Activated naive CD8-positive, alpha-beta T cell treated with anti-CD3 and anti-CD28 coated beads, Interleukin-2, amount 10 ng/mL, durations not matched to agents 7 days and 5 days (primary cell): ENCODE measurements at regions of chr2 and their contacts with region 1.

Region 1: GRCh38 chr2:28392297-28393113 is at the start of gene FOSL2:
- DNase-seq: peak; percentile 91
- ATAC-seq: peak; percentile 79
- H3K4me3 Mint-ChIP-seq: peak within 1 kb of the TSS; percentile 89
- H3K27ac Mint-ChIP-seq: peak within 1 kb of the TSS; percentile 98
- H3K4me1 Mint-ChIP-seq: peaks cover 24% of the 10 kb centered on the region
- H3K27me3 Mint-ChIP-seq: no peaks in the 10 kb centered on the region
- total RNA-seq, gene FOSL2: 24.9 to 30.1 TPM

Region 2: GRCh38 chr2:28252311-28252710 is 140.2 kb before region 1 on chr2:
- POLR2A ChIA-PET with region 1: interaction called, 19 read pairs
- DNase-seq: no peak
- ATAC-seq: peak; percentile 87
- H3K4me3 Mint-ChIP-seq: peak overlapping the region; percentile 72
- H3K27ac Mint-ChIP-seq: peak overlapping the region; percentile 82
- H3K4me1 Mint-ChIP-seq: peaks cover 44% of the 10 kb centered on the region
- H3K27me3 Mint-ChIP-seq: no peaks in the 10 kb centered on the region

Region 3: DNA sequence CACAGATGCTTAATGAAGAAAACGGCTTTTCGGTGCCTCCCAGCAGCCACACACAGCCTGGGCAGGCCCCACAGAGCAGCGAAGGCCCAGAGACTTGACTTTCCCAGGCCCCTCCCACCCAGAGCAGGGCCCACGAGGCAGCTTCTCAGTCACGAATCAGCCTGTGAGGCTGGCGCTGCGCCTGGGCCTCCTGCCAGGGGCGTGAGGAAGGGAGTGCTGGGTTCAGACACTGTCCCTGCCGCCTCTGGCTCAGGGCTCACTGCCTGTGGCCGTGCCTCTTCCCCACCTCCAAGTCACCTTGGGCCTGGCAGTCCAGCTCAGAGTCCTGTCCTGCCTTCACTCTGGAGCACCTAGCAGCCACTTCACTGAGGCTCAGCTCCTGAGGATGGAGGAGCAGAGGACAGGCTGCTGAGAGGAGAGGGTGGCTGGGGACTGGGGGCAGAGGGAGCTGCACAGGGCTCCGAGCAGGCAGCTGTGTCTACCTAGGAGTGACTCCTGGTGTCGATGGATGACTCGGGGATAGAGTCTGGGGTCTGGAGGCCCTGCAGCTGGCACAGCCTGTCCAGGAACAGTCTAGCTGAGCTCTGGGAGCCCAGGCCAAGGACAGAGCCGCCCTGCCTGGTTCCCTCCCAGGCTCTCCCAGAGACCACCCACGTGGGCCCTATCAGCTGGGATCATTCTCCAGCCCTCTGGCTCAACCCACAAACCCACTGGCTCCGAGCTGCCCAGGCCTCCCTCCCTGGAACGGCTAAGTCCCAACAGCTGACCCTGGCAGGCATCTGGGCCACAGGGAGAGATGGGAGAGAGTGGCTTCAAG is 36.2 kb before region 1 on chr2:
- POLR2A ChIA-PET with region 1: interaction called, 13 read pairs
- DNase-seq: no peak
- ATAC-seq: no peak
- H3K4me3 Mint-ChIP-seq: no peak overlapping the region
- H3K27ac Mint-ChIP-seq: peak overlapping the region; percentile 64
- H3K4me1 Mint-ChIP-seq: peaks cover 29% of the 10 kb centered on the region
- H3K27me3 Mint-ChIP-seq: no peaks in the 10 kb centered on the region

Region 4: GRCh38 chr2:28377984-28378678 is 14.4 kb before region 1 on chr2:
- POLR2A ChIA-PET with region 1: interaction called, 38 read pairs
- DNase-seq: no peak
- ATAC-seq: peak; percentile 3
- H3K4me3 Mint-ChIP-seq: peak overlapping the region; percentile 10
- H3K27ac Mint-ChIP-seq: peak overlapping the region; percentile 38
- H3K4me1 Mint-ChIP-seq: peaks cover 40% of the 10 kb centered on the region
- H3K27me3 Mint-ChIP-seq: peaks cover 3% of the 10 kb centered on the region

Region 5: GRCh38 chr2:28423856-28424605 is 31.5 kb after region 1 on chr2:
- POLR2A ChIA-PET with region 1: interaction called, 12 read pairs
- DNase-seq: no peak
- ATAC-seq: peak; percentile 86
- H3K4me3 Mint-ChIP-seq: peak overlapping the region; percentile 78
- H3K27ac Mint-ChIP-seq: peak overlapping the region; percentile 96
- H3K4me1 Mint-ChIP-seq: peaks cover 52% of the 10 kb centered on the region
- H3K27me3 Mint-ChIP-seq: no peaks in the 10 kb centered on the region